ENCODE measurements at regions of chr1 and their contacts with region 1.

Region 1: DNA sequence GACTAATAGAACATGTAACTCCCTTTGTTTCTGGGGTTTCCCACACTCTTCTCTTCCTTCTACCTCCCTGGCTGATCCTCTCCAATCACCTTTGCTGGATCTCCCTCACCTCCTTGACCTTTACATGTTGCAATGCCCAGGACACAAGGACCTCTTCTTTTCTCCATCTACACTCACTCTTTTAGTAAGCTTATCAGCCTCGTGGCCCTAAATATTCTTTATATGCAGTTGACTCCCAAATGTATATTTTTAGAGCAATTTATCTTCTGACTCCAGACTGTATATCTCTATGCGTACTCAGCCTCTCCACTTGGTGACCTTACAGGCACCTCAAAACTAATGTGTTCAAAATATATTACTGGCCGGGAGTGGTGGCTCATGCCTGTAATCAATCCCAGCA is 18.4 kb upstream of the CLSPN start:
- DNase-seq: no peak
- H3K4me3 ChIP-seq: no peak overlapping the region
- H3K27ac ChIP-seq: no peak overlapping the region
- H3K4me1 ChIP-seq: no peaks in the 10 kb centered on the region
- H3K27me3 ChIP-seq: no peaks in the 10 kb centered on the region
- CTCF ChIP-seq: no peak
- EP300 ChIP-seq: no peak
- RAD21 ChIP-seq: no peak

Region 2: GRCh38 chr1:35777109-35777508 is 11.0 kb before region 1 on chr1:
- CTCF ChIA-PET with region 1: interaction called, 11 read pairs
- POLR2A ChIA-PET with region 1: no interaction called
- DNase-seq: no peak
- H3K4me3 ChIP-seq: no peak overlapping the region
- H3K27ac ChIP-seq: no peak overlapping the region
- H3K4me1 ChIP-seq: no peaks in the 10 kb centered on the region
- H3K27me3 ChIP-seq: no peaks in the 10 kb centered on the region
- CTCF ChIP-seq: no peak
- EP300 ChIP-seq: no peak
- RAD21 ChIP-seq: no peak